RWPE1 (cell line): ENCODE measurements at regions of chr21 and their contacts with region 1.

Region 1: GRCh38 chr21:44792702-44793591 is 8.7 kb downstream of the UBE2G2 start:
- DNase-seq: peak; percentile 81
- H3K27ac ChIP-seq: no peak overlapping the region
- CTCF ChIP-seq: peak; percentile 86

Region 2: DNA sequence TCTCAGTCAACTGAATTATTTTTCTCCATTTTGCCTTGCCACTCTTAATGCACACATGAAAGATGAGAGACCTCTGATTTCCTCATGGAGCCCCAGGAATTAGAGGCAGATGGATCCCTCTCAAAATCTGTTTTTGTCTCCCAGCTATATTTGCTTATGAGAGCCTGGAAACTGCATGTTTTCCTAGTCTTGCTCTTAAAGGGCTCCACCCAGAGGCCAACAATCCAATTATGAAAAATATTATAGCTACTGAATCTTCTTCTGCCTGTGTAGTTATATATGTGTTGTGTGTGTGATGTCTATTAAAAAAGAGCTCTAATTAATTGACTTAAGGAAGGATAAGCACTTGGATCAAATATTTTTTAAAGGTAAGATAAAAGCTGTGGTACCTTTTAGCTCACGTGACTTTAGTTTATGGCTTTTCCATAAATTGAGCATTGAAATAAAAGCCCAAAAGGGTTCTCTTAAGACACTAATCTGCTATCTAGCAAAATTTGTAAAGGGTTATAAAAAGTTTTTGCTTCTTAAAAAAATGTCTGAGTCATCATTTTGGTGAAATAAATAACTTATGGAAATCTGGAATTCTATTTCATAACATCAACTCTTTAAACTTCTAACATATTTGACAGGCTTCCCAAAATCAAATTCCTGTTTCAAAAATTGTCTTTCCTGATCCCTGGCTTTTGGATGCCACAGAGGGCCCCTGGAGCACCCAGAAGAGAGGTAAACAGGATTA is 50.4 kb before region 1 on chr21:
- CTCF ChIA-PET with region 1: interaction called, 10 read pairs
- POLR2A ChIA-PET with region 1: no interaction called
- DNase-seq: no peak
- H3K27ac ChIP-seq: no peak overlapping the region
- CTCF ChIP-seq: peak; percentile 48